ENCODE measurements at regions of chr20 and their contacts with region 1.

Region 1: DNA sequence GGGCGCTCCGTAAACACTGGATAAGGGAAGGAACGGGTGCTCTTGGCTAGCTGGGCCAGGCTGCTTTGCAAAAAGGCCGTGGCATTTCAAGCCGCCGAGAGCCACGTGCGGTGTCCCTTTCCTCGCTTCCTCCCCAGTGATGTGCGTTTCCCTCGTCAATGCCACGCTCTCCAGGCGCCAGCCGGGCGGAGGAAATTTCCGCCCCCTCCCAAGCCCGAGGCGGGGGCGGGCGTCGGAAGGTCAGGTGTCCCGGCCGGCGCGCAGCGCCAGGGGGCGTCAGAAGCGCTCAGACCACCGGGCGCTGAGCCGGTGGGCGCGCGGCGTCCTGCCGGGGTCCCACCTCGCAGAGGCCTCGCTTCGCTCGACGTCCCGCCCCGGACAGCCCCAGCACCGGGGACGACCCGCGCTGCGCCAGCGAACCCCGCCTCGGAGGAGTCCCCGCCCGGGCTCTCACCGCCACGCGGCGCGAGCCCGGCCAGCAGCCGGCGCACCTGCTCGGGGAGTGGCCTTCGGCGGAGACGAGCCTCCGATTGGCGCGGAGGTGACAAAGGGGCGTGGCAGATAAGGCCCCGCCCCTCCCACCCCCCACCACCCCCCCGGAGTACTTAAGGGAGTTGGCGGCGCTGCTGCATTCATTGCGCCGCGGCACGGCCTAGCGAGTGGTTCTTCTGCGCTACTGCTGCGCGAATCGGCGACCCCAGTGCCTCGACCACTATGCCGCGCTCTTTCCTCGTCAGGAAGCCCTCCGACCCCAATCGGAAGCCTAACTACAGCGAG is at the start of gene SNAI1:
- DNase-seq: peak; percentile 88 to 97
- ATAC-seq: peak; percentile 80 to 81
- H3K4me3 ChIP-seq: peak within 1 kb of the TSS; percentile 69
- H3K27ac ChIP-seq: peak within 1 kb of the TSS; percentile 80 to 95
- H3K4me1 ChIP-seq: peaks cover 57% of the 10 kb centered on the region
- CTCF ChIP-seq: peak; percentile 90
- EP300 ChIP-seq: no peak
- POLR2A ChIP-seq: peak; percentile 99
- RAD21 ChIP-seq: peak; percentile 34 to 79; a peak in 4 of 5 replicates
- polyA plus RNA-seq, gene SNAI1: 7.0 and 7.2 TPM in 2 replicates

Region 2: GRCh38 chr20:49964964-49965780 is 17.4 kb before region 1 on chr20:
- CTCF ChIA-PET with region 1: interaction called, 90 read pairs
- POLR2A ChIA-PET with region 1: no interaction called
- DNase-seq: peak; percentile 78 to 85
- ATAC-seq: peak; percentile 94 to 95
- H3K4me3 ChIP-seq: no peak overlapping the region
- H3K27ac ChIP-seq: no peak overlapping the region; a peak in 1 of 6 replicates
- H3K4me1 ChIP-seq: peaks cover 25% of the 10 kb centered on the region
- CTCF ChIP-seq: peak; percentile 55
- EP300 ChIP-seq: no peak
- POLR2A ChIP-seq: no peak
- RAD21 ChIP-seq: peak; percentile 34 to 47; a peak in 4 of 5 replicates

Region 3: DNA sequence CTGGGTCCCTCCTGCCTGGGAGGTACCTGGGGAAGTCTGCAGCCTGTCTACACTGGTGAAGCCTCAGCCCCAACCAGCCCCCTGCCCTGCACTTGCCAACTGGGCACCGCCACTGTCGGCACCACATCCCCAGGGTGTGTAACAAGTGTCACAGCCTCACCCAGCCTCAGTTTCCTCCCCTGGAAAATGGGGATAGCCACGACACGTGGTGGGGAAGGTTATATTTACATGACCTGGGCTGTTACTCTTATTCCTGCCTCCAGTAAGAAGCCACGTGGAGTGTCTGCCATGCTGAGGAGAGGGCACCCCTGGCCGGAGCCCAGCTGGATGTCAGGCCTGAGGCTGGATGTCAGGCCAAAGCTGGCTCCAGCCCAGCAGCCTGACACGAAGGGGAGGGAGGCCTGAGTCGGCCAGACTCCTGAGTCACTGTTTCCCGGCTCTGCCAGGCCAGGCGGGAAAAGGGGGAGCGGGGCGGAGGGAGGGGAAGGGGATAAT is 45.1 kb after region 1 on chr20:
- CTCF ChIA-PET with region 1: interaction called, 31 read pairs
- POLR2A ChIA-PET with region 1: no interaction called
- DNase-seq: peak; percentile 84 to 87
- ATAC-seq: peak; percentile 36 to 60
- H3K4me3 ChIP-seq: no peak overlapping the region
- H3K27ac ChIP-seq: peak overlapping the region; percentile 93 to 95
- H3K4me1 ChIP-seq: peaks cover 55% of the 10 kb centered on the region
- CTCF ChIP-seq: no peak
- EP300 ChIP-seq: peak in 1 of 2 experiments; percentile 58; a peak in 1 of 5 replicates
- POLR2A ChIP-seq: no peak
- RAD21 ChIP-seq: peak in 1 of 2 experiments; percentile 18; a peak in 1 of 5 replicates

Region 4: GRCh38 chr20:50048420-50049166 is 66.1 kb after region 1 on chr20:
- CTCF ChIA-PET with region 1: interaction called, 20 read pairs
- POLR2A ChIA-PET with region 1: no interaction called
- DNase-seq: no peak
- ATAC-seq: peak; percentile 25 to 46; a peak in 3 of 6 replicates
- H3K4me3 ChIP-seq: no peak overlapping the region
- H3K27ac ChIP-seq: peak overlapping the region in 1 of 2 experiments; percentile 76; a peak in 3 of 6 replicates
- H3K4me1 ChIP-seq: peaks cover 12% of the 10 kb centered on the region; the same call in 1 of the 3 replicates
- CTCF ChIP-seq: no peak
- EP300 ChIP-seq: no peak
- POLR2A ChIP-seq: no peak
- RAD21 ChIP-seq: no peak

Region 5: DNA sequence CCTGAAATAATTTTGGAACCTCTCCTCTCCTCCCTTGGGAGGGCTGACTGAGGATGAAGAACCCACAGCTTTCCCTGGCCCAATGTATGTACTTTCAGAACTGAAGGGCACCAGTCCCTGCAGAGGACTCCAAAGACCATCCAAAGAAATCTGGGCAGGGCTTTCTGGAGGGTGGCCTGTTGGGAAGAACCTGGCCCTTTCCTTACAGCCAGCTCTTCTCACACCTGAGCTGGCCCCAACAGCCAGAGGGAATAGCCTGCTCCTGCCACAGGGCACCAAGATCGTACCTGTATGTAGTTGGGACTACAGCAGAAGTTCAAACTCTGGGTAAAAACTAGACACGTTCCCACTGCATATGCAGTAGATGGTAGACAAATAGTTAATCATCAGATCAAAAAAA is 97.3 kb after region 1 on chr20:
- CTCF ChIA-PET with region 1: interaction called, 1,049 read pairs
- POLR2A ChIA-PET with region 1: no interaction called
- DNase-seq: no peak
- ATAC-seq: no peak; a peak in 2 of 6 replicates
- H3K4me3 ChIP-seq: no peak overlapping the region
- H3K27ac ChIP-seq: 0 out of 6 replicates have a peak overlapping the region, but pooled peaks of 1 of the 2 experiments have one; percentile 37
- H3K4me1 ChIP-seq: no peaks in the 10 kb centered on the region
- CTCF ChIP-seq: no peak
- EP300 ChIP-seq: no peak
- POLR2A ChIP-seq: no peak
- RAD21 ChIP-seq: no peak

Region 6: DNA sequence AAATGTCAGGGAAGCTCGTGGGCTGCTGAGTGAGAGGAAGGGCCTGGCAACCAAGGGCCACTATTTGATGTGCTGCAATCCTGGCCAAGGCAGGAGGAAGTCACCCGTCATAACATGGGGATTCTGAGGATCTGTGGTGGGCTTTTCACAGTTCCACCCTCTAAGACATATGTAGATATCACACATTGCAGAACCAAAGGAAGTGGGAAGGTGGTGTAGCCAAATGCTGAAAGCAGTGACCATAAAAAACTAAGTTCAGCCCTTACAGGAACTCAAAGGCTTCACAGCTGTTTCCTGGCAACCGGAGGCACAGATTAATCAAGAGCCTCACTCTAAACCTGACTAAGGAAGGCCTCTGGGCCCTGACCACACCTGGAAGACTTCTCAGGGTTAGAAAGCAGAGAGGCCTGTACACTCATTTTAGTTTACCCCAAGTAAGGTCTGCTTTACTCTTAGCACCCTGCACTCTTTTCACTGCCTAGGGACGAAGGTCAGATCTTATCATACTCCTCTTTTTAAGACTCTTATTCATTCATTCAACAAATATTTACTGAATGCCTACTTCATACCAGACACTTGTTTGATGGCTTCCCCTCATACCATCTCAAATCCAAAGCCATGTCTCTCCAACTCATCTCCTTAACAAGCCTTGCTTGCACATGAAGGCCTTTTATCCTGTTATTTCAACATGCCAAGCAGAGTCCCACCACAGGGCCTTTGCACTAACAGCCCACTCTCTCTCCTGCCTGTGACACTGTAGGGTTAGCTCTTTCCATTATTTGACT is 127.8 kb after region 1 on chr20:
- CTCF ChIA-PET with region 1: interaction called, 18 read pairs
- POLR2A ChIA-PET with region 1: interaction called, 3 read pairs
- DNase-seq: peak in 1 of 2 experiments; percentile 31
- ATAC-seq: peak in 1 of 2 experiments; percentile 3; a peak in 2 of 6 replicates
- H3K4me3 ChIP-seq: no peak overlapping the region
- H3K27ac ChIP-seq: peak overlapping the region; percentile 5 to 94; a peak in 4 of 6 replicates
- H3K4me1 ChIP-seq: peaks cover 67% of the 10 kb centered on the region
- CTCF ChIP-seq: no peak
- EP300 ChIP-seq: no peak
- POLR2A ChIP-seq: no peak
- RAD21 ChIP-seq: no peak

Region 7: DNA sequence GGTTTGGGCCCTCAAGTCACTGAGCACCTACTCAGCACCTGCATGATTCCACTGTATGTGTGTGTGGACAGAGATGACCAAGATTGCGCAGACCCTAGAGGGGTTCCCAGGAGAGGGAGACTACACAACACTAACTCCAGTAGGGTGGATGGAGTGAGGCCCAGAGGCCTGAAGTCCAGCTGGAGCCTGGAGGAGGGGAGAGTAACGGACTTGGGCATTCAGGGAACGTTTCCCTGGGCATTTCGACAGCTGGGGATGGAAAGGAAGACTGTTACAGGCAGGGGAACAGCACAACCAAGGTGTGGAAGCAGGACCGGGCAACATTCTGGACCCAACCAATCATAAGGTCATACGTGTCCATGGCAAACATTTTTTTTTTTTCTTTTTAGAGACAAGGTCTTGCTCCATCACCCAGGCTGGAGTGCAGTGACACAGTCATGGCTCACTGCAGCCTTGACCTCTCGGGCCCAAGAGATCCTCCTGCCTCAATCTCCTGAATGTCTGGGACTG is 197.0 kb after region 1 on chr20:
- CTCF ChIA-PET with region 1: interaction called, 24 read pairs
- POLR2A ChIA-PET with region 1: no interaction called
- DNase-seq: no peak
- ATAC-seq: peak; percentile 73 to 76
- H3K4me3 ChIP-seq: no peak overlapping the region
- H3K27ac ChIP-seq: peak overlapping the region; percentile 43 to 73; a peak in 5 of 6 replicates
- H3K4me1 ChIP-seq: peaks cover 4% of the 10 kb centered on the region; the same call in 1 of the 3 replicates
- CTCF ChIP-seq: no peak; the same call in 1 of the 3 replicates
- EP300 ChIP-seq: no peak
- POLR2A ChIP-seq: no peak
- RAD21 ChIP-seq: no peak

Region 8: DNA sequence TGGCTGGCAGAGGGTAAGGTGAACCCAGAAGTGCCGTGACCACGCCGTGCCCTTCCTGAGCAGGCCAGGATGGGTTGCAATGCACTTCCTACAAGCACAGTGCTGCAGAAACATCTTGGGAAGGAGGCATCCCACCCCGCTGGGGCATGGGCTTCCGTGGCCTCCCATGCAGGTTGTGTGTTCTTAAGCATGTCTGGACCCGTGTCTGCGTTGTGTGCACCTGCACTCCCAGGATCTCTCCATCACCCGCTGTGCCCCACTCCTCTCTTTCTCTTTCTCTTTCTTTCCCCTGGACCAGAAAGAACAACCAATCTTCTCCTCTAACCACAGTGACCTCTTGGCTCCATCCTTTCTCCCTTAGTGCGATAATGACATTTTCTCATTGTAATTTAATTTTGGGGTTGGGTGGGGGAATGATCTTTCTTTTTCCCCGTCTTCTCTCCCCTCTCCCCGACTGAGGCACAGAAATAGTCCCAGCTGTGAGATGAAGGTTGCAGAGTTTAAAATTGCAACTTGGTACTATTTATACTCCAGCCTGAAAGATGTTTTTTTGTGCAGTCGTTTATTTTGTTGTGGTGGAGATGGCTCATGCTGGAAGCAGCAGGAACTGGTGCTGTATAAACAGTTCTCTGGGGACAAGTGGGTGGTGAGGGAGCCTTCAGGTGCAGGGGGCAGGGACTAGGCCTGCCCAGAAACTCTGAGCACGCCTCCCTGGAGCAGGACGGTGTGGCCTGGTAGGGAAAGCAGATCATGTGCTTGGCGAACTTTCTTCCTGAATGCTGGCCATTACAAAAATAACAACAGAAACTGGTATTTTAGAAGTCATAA is 832.8 kb after region 1 on chr20:
- CTCF ChIA-PET with region 1: no interaction called
- POLR2A ChIA-PET with region 1: no interaction called
- DNase-seq: no peak
- ATAC-seq: no peak
- H3K4me3 ChIP-seq: no peak overlapping the region
- H3K27ac ChIP-seq: no peak overlapping the region; a peak in 1 of 6 replicates
- H3K4me1 ChIP-seq: peaks cover 12% of the 10 kb centered on the region
- CTCF ChIP-seq: no peak
- EP300 ChIP-seq: no peak
- POLR2A ChIP-seq: no peak
- RAD21 ChIP-seq: no peak